HCT116 (cell line): ENCODE measurements at regions of chr14 and their contacts with region 1.

Region 1: GRCh38 chr14:96796851-96797581 is at the start of gene VRK1:
- DNase-seq: peak; percentile 86
- ATAC-seq: peak; percentile 98
- H3K4me3 ChIP-seq: peak within 1 kb of the TSS; percentile 84 to 90
- H3K27ac ChIP-seq: peak within 1 kb of the TSS; percentile 66
- H3K4me1 ChIP-seq: peaks cover 3 to 10% of the 10 kb centered on the region in 2 experiments; a peak in 3 of 4 replicates
- H3K27me3 ChIP-seq: no peaks in the 10 kb centered on the region
- CTCF ChIP-seq: no peak
- POLR2A ChIP-seq: no peak
- RAD21 ChIP-seq: no peak
- total RNA-seq, gene VRK1: 51.4 TPM

Region 2: DNA sequence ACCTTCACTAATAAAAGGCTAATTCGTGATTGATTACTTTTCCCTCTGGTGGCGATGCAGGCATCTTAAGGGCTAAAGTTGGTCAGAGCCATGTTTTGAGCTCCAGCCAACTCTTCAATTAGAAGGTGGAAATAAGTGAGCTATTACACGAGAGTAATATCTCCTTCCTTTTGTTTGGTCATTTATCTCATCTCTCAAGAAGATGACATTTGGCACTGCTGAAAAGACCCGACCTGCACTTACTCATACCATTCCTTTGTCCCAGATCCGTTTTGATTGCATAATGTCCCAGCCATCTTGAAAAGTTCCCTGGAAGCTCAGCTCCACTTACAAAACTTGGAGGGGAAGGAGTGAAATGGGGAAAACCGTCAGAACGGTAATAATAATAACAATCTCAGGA is 316.3 kb after region 1 on chr14:
- CTCF ChIA-PET with region 1: no interaction called
- POLR2A ChIA-PET with region 1: no interaction called
- RAD21 ChIA-PET with region 1: no interaction called
- intact Hi-C with region 1: loop called (anchors 10 kb)
- DNase-seq: peak; percentile 46
- ATAC-seq: peak; percentile 70
- H3K4me3 ChIP-seq: no peak overlapping the region
- H3K27ac ChIP-seq: peak overlapping the region; percentile 21; the same call in 1 of the 2 replicates
- H3K4me1 ChIP-seq: peaks cover 4 to 63% of the 10 kb centered on the region in 2 experiments
- H3K27me3 ChIP-seq: no peaks in the 10 kb centered on the region
- CTCF ChIP-seq: no peak
- POLR2A ChIP-seq: no peak
- RAD21 ChIP-seq: no peak